Kidney (tissue), 22 donors: ENCODE measurements at regions of chr11 and their contacts with region 1.

Region 1: GRCh38 chr11:57527056-57527631 is 3.4 kb downstream of the TIMM10 start:
- DNase-seq: peak in 4 of 5 donors; percentile 69 to 79 (median 74)
- H3K4me3 ChIP-seq: no peak overlapping the region
- H3K27ac ChIP-seq: no peak overlapping the region
- H3K4me1 ChIP-seq: peaks cover 0 to 7% (median 0%) of the 10 kb centered on the region in 3 donors
- H3K27me3 ChIP-seq: no peaks in the 10 kb centered on the region
- CTCF ChIP-seq: peak; percentile 93

Region 2: GRCh38 chr11:57205041-57205671 is 322.0 kb before region 1 on chr11:
- intact Hi-C with region 1: no loop called
- DNase-seq: no peak
- H3K4me3 ChIP-seq: no peak overlapping the region
- H3K27ac ChIP-seq: no peak overlapping the region
- H3K4me1 ChIP-seq: no peaks in the 10 kb centered on the region
- H3K27me3 ChIP-seq: peaks cover 5% of the 10 kb centered on the region
- CTCF ChIP-seq: no peak

Region 3: DNA sequence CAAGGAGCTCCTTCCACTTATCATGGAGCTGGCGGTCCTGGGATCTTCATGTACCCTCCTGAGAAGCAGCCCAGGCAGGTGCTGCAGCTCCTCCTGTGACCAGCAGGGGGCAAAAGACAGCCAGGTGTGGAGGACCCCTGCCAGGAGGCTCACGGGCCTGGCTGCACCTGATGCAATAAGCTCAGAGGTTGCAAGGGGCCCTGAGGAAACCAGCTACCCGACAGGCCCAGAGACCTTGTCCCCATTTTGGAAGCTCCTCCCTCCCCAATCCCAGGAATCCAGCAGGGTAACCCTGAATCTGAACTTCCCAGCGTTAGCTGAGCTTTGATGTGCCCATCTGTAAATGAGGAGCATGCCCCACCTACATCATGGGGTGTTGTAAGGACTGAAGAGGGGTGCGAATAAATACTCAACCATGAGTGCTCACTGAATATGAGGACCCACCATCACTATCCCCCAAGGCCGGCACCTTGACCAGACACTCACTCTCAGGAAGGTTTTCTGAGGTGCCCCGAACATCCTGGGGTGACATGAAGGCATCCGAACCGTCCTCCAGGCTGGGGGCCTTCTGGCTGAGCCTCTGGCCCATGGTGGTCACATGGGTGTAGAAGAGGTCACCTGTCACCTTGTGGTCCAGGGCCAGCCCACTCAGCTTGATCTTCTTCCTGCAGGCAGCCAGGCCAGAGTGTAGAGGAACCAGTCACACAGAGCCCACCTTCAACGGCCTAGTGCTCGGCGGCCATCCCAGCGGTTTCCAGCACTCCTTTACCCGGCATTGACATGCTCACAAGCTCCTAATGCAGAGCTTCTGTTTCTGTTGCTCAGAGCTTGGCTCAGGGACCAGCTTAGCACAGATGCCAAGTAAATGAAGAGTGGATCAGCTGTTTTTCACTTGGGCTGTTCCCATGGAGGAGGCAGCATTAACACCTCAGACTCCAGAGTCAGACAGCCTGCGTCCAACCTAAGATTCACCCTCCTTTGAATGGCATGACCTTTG is 33.3 kb before region 1 on chr11:
- intact Hi-C with region 1: loop called (anchors 5 kb)
- DNase-seq: peak; percentile 71 to 85 (median 79)
- H3K4me3 ChIP-seq: no peak overlapping the region
- H3K27ac ChIP-seq: no peak overlapping the region
- H3K4me1 ChIP-seq: peaks cover 0 to 2% (median 0%) of the 10 kb centered on the region in 3 donors
- H3K27me3 ChIP-seq: no peaks in the 10 kb centered on the region
- CTCF ChIP-seq: peak; percentile 91